Activated CD4-positive, alpha-beta T cell treated with anti-CD3 and anti-CD28 coated beads, Interleukin-2, amount 10 ng/mL, durations not matched to agents 7 days and 5 days (primary cell): ENCODE measurements at regions of chr16 and their contacts with region 1.

Region 1: DNA sequence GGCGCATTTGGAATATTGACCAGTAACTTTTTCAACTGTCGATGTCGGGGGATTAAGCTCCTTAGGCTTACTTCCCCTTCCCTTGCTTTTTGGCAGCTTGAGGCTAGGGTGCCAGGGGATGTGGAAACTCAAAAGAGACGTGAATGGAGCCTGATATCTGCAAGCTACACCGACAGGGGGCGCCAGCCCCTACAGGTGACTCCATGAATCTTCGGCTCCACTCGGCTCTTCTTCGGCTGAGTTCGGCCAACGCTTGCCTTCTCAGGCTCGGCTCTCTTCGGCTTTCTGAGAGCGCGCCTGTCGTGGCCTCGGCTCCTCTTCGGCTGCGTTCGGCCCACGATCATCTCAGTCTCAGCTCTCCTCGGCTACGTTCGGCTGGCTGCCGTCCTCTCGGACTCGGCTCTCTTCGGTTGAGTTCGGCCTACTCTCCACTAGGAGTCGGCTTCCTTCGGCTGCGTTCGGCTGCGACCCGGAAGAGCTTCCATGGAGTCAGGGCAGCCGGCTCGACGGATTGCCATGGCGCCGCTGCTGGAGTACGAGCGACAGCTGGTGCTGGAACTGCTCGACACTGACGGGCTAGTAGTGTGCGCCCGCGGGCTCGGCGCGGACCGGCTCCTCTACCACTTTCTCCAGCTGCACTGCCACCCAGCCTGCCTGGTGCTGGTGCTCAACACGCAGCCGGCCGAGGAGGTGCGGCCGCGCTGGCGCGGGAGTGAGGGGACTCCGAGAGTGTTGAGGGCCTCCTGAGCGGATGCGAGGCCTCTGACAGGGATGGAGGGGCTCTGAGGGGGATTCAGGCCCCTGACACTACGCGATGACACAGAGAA is at the start of gene ERCC4:
- DNase-seq: peak; percentile 99
- H3K4me3 Mint-ChIP-seq: peak within 1 kb of the TSS; percentile 94
- H3K27ac Mint-ChIP-seq: peak within 1 kb of the TSS; percentile 96
- H3K4me1 Mint-ChIP-seq: peaks cover 26% of the 10 kb centered on the region
- H3K27me3 Mint-ChIP-seq: peaks cover 4% of the 10 kb centered on the region
- total RNA-seq, gene ERCC4: 9.4 to 12.3 TPM

Region 2: DNA sequence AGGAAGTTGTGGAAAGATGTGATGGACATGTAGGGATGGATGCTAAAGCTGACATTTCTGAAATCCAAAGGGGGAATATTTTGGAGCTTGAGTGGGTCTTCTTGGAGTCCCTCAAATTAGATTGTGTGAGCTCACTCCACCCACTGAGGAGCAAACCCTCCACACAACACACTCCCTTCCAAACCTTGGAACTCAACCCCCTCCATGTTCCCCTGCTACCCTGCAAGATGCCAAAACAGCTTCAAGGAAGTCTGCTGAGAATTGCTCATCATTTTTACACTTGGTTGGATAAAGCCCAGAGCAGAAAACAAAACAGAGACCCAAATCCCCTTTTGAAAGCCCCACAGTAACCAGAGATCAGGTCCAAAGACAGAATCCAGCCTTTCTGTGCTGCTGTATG is 103.2 kb before region 1 on chr16:
- CTCF ChIA-PET with region 1: no interaction called
- POLR2A ChIA-PET with region 1: no interaction called
- DNase-seq: no peak
- H3K4me3 Mint-ChIP-seq: no peak overlapping the region
- H3K27ac Mint-ChIP-seq: no peak overlapping the region
- H3K4me1 Mint-ChIP-seq: no peaks in the 10 kb centered on the region
- H3K27me3 Mint-ChIP-seq: no peaks in the 10 kb centered on the region

Region 3: DNA sequence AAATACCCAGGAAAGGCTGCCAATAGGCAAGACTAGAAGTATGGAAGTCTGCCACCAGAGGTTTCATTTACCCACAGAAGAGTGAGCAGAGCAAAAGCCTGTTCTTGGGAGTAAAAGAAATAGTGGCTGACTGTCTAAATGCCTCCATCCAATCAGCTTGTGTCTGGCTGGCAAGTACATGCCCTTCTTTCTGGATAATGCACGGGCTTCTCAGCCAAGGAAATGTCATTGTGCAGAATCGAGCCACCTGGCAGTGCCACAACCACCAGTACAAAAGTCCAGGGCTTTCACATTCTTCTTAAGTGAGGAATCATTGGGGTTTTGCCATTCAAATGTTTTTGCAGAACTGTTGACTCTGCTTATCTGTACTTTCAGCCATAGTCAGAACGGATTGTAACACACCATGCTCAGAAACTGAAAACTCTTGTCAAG is 10.0 kb before region 1 on chr16:
- CTCF ChIA-PET with region 1: interaction called, 11 read pairs
- POLR2A ChIA-PET with region 1: no interaction called
- DNase-seq: no peak
- H3K4me3 Mint-ChIP-seq: no peak overlapping the region
- H3K27ac Mint-ChIP-seq: no peak overlapping the region
- H3K4me1 Mint-ChIP-seq: no peaks in the 10 kb centered on the region
- H3K27me3 Mint-ChIP-seq: peaks cover 6% of the 10 kb centered on the region

Region 4: GRCh38 chr16:13935408-13935807 is 15.5 kb after region 1 on chr16:
- CTCF ChIA-PET with region 1: interaction called, 10 read pairs
- POLR2A ChIA-PET with region 1: no interaction called
- DNase-seq: no peak
- H3K4me3 Mint-ChIP-seq: no peak overlapping the region
- H3K27ac Mint-ChIP-seq: no peak overlapping the region
- H3K4me1 Mint-ChIP-seq: peaks cover 10% of the 10 kb centered on the region
- H3K27me3 Mint-ChIP-seq: no peaks in the 10 kb centered on the region

Region 5: DNA sequence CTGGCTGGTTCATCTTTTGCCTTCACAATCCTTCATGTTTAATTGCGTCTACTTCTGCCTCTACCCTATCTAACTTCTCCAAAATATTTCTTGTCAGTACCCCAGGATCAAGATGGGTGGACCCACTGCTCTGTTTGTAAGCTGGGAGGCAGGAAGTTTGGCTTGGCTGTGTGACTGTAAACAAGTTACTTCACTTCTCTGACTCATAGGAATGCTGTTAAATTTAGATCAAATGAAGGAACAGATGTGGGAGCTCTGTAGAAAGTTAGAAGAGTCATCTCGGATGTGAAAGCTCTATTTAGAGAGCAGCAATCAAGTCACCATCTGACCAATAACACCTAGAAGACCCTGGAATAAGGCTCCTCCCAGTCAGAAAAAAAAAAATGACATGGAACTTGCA is 96.1 kb after region 1 on chr16:
- CTCF ChIA-PET with region 1: no interaction called
- POLR2A ChIA-PET with region 1: no interaction called
- DNase-seq: no peak
- H3K4me3 Mint-ChIP-seq: no peak overlapping the region
- H3K27ac Mint-ChIP-seq: no peak overlapping the region
- H3K4me1 Mint-ChIP-seq: no peaks in the 10 kb centered on the region
- H3K27me3 Mint-ChIP-seq: peaks cover 3% of the 10 kb centered on the region